H1 (cell line): ENCODE measurements at regions of chr11 and their contacts with region 1.

Region 1: GRCh38 chr11:20754933-20755332 is 85.5 kb downstream of the NELL1 start:
- DNase-seq: peak; percentile 34 to 56
- H3K4me3 ChIP-seq: no peak overlapping the region
- H3K27ac ChIP-seq: no peak overlapping the region
- H3K4me1 ChIP-seq: no peaks in the 10 kb centered on the region
- H3K27me3 ChIP-seq: no peaks in the 10 kb centered on the region
- CTCF ChIP-seq: peak; percentile 61 to 80 (median 66)
- EP300 ChIP-seq: no peak
- POLR2A ChIP-seq: no peak
- RAD21 ChIP-seq: peak; percentile 63 to 68

Region 2: GRCh38 chr11:20739107-20739506 is 15.8 kb before region 1 on chr11:
- CTCF ChIA-PET with region 1: interaction called, 30 read pairs
- POLR2A ChIA-PET with region 1: no interaction called
- DNase-seq: no peak
- H3K4me3 ChIP-seq: no peak overlapping the region
- H3K27ac ChIP-seq: no peak overlapping the region
- H3K4me1 ChIP-seq: peaks cover 2 to 11% (median 8%) of the 10 kb centered on the region in 4 experiments; a peak in 6 of 7 replicates
- H3K27me3 ChIP-seq: no peaks in the 10 kb centered on the region
- CTCF ChIP-seq: no peak
- EP300 ChIP-seq: no peak
- POLR2A ChIP-seq: no peak
- RAD21 ChIP-seq: no peak

Region 3: DNA sequence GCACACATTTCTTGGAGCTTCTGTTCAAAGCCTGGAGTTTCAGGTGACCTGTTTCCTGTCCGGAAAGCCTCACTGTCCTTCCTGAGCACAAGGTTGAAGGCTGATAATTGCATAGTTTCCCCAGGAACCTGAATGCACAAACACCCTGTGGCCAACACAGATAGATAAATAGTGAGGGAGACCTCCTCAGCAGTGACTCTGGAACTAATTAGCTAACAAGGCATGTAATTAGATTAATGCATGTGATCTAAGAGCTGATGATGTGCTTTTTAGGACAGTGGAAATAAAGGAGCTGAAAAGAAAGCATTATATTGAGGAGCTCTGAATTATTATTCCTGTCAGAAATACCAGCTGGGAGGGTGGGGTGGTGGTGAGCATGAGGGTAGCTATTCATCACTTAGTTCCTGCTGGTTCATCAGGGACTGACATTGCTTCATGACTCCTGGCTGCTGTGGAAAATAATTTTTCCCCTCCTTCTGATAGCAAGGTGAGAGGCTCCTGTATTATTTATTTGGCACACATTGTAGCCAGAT is 15.5 kb after region 1 on chr11:
- CTCF ChIA-PET with region 1: interaction called, 69 read pairs
- POLR2A ChIA-PET with region 1: no interaction called
- DNase-seq: no peak
- H3K4me3 ChIP-seq: no peak overlapping the region
- H3K27ac ChIP-seq: no peak overlapping the region
- H3K4me1 ChIP-seq: no peaks in the 10 kb centered on the region
- H3K27me3 ChIP-seq: no peaks in the 10 kb centered on the region
- CTCF ChIP-seq: no peak
- EP300 ChIP-seq: no peak
- POLR2A ChIP-seq: no peak
- RAD21 ChIP-seq: no peak

Region 4: GRCh38 chr11:20795005-20795404 is 40.1 kb after region 1 on chr11:
- CTCF ChIA-PET with region 1: no interaction called
- POLR2A ChIA-PET with region 1: no interaction called
- DNase-seq: no peak
- H3K4me3 ChIP-seq: no peak overlapping the region
- H3K27ac ChIP-seq: no peak overlapping the region
- H3K4me1 ChIP-seq: peaks cover 0 to 2% (median 0%) of the 10 kb centered on the region in 4 experiments; a peak in 1 of 7 replicates
- H3K27me3 ChIP-seq: no peaks in the 10 kb centered on the region
- CTCF ChIP-seq: no peak
- EP300 ChIP-seq: no peak
- POLR2A ChIP-seq: no peak
- RAD21 ChIP-seq: no peak